SK-N-SH (cell line): ENCODE measurements at regions of chr7 and their contacts with region 1.

Region 1: DNA sequence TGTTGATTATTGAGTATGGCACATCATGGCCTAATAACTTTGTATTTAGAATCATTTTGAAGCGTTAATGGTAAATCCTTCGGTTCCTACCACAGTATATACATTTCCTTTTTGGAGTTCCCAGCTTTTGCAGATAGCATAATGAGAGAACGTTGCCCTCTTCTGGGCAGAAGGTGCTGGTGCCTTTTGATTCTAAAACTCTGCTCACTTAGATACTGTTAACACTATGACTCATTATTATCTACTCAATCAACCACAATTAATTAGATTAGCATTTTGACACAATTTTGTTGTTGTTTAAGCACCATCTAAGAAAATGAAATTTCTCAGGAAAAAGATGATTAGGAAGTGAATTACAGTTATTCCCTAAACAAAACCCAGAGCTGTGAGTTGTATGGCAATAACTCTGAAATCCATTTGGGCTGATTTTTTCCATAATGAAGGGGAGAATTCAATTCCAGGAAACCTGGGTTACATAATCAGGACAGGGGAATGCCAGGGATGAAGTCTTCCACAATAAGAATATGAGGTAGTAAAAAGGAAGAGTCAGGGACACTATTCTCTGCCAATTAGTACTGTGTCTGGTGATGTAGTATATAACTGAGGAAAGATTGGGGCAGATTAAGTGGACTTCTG is 11.5 kb upstream of the DLD start:
- DNase-seq: peak; percentile 75
- H3K4me3 ChIP-seq: no peak overlapping the region; a peak in 1 of 4 replicates
- H3K27ac ChIP-seq: no peak overlapping the region
- H3K4me1 ChIP-seq: peaks cover 0 to 2% of the 10 kb centered on the region in 2 experiments; a peak in 1 of 4 replicates
- H3K27me3 ChIP-seq: no peaks in the 10 kb centered on the region
- CTCF ChIP-seq: peak; percentile 98
- EP300 ChIP-seq: no peak
- RAD21 ChIP-seq: peak; percentile 90

Region 2: DNA sequence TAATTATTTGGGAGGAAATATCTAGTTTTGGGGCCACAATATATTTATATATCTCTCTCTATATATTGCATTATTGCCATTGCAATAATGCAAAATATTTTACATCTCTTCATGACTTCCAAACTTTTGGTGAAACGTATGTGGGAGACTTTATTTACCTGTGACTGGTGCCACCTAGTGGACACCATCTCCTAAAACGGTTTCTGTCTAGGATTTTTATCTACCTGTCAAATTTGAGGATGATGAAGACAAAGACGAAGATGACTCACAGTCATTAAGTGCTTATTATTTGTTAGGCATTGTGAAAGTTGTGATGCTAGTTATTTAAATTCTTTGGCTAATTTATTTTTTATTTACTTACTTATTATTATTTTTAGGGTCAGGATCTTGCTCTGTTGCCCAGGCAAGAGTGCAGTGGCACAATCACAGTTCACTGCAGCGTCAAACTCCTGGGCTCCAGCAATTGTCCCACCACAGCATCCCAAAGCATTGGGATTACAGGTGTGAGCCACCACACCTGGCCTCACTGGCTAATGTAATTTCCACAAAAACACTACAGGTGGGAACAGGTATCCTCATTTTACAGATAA is 154.3 kb before region 1 on chr7:
- CTCF ChIA-PET with region 1: interaction called, 18 read pairs
- POLR2A ChIA-PET with region 1: no interaction called
- DNase-seq: peak; percentile 71
- H3K4me3 ChIP-seq: no peak overlapping the region
- H3K27ac ChIP-seq: no peak overlapping the region
- H3K4me1 ChIP-seq: no peaks in the 10 kb centered on the region
- H3K27me3 ChIP-seq: no peaks in the 10 kb centered on the region
- CTCF ChIP-seq: peak; percentile 97
- EP300 ChIP-seq: no peak
- RAD21 ChIP-seq: peak; percentile 94

Region 3: GRCh38 chr7:107768272-107768671 is 111.2 kb before region 1 on chr7:
- CTCF ChIA-PET with region 1: interaction called, 11 read pairs
- POLR2A ChIA-PET with region 1: no interaction called
- DNase-seq: no peak
- H3K4me3 ChIP-seq: no peak overlapping the region
- H3K27ac ChIP-seq: no peak overlapping the region
- H3K4me1 ChIP-seq: no peaks in the 10 kb centered on the region; a peak in 2 of 4 replicates
- H3K27me3 ChIP-seq: no peaks in the 10 kb centered on the region
- CTCF ChIP-seq: no peak
- EP300 ChIP-seq: no peak
- RAD21 ChIP-seq: no peak

Region 4: DNA sequence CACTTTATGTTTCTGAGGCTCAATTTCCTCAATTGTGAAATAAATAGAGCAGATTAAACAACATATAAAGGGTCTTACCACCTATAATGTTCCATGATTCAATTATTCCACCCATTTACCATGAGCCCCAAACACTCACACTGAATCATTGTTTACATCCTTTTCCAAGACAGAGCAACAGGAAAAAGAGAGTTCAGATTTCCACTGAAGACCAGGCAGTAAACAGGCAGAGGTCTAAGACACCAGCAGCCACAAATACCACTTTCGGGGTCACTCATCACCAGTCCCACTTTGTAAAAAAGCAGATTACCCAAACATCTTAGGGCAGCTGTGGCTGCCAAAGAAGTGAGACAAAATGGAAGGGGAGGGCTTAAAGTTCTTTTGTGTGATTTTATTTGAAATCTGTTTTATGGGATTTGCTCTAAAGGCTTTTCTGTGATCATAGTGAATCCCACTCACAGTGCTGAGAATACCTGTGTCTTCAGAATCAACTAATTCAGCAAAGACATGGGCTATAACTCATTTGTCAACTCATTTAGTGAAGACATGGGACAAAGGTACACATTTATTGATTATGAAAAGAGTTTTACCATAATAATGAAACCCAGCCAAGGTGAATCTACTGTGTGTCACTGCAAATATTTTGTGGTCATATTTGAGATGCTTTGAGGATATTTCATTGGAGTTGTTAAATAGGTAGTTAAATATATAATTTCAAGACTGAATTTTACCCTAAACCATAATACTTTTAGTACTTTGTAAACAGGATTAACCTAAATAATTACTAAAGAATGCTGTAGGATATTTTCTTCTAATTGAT is 13.4 kb before region 1 on chr7:
- CTCF ChIA-PET with region 1: interaction called, 33 read pairs
- POLR2A ChIA-PET with region 1: no interaction called
- DNase-seq: no peak
- H3K4me3 ChIP-seq: no peak overlapping the region
- H3K27ac ChIP-seq: no peak overlapping the region
- H3K4me1 ChIP-seq: no peaks in the 10 kb centered on the region; a peak in 2 of 4 replicates
- H3K27me3 ChIP-seq: no peaks in the 10 kb centered on the region; the same call in 1 of the 2 replicates
- CTCF ChIP-seq: no peak
- EP300 ChIP-seq: no peak
- RAD21 ChIP-seq: no peak

Region 5: DNA sequence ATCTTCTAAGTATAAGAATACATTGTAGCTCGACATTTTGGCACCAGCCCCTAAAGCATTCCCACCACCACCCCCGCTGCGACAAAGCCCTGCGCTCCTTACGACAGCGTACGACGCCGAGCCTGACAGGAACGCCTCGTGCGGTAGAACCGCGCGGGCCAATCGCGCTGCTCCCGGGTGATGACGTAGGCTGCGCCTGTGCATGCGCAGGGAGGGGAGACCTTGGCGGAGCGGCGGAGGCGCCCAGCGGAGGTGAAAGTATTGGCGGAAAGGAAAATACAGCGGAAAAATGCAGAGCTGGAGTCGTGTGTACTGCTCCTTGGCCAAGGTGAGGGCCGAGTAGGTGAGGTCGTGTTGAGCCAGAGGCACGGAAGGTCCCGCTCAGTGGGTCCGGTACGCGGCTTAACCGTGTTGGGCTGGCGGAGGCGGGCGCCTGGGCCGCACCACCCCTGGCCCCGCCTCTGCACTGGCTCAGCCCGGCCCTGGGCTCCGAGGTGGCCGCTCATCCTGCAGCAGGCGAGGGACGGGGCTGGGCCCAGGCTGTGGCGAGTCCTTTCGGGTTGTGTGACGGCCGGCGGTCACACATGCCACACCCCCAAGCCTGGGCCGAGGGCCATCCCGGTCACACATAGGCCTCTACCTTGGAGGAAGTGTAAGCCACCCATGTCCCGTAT is 11.6 kb after region 1 on chr7 and contains the start of gene DLD:
- CTCF ChIA-PET with region 1: interaction called, 59 read pairs
- POLR2A ChIA-PET with region 1: interaction called, 4 read pairs
- DNase-seq: peak; percentile 99
- H3K4me3 ChIP-seq: peak within 1 kb of the TSS; percentile 85 to 94
- H3K27ac ChIP-seq: peak within 1 kb of the TSS; percentile 81 to 95
- H3K4me1 ChIP-seq: peaks cover 10 to 31% of the 10 kb centered on the region in 2 experiments; a peak in 3 of 4 replicates
- H3K27me3 ChIP-seq: peaks cover 1% of the 10 kb centered on the region; the same call in 1 of the 2 replicates
- CTCF ChIP-seq: no peak
- EP300 ChIP-seq: no peak
- RAD21 ChIP-seq: no peak
- polyA plus RNA-seq, gene DLD: 140 and 197 TPM in 2 replicates

Region 6: GRCh38 chr7:107907790-107908189 is 28.3 kb after region 1 on chr7:
- CTCF ChIA-PET with region 1: interaction called, 14 read pairs
- POLR2A ChIA-PET with region 1: no interaction called
- DNase-seq: no peak
- H3K4me3 ChIP-seq: no peak overlapping the region
- H3K27ac ChIP-seq: no peak overlapping the region
- H3K4me1 ChIP-seq: no peaks in the 10 kb centered on the region
- H3K27me3 ChIP-seq: no peaks in the 10 kb centered on the region
- CTCF ChIP-seq: no peak
- EP300 ChIP-seq: no peak
- RAD21 ChIP-seq: no peak